GM12878 (cell line): ENCODE measurements at regions of chr3 and their contacts with region 1.

Region 1: DNA sequence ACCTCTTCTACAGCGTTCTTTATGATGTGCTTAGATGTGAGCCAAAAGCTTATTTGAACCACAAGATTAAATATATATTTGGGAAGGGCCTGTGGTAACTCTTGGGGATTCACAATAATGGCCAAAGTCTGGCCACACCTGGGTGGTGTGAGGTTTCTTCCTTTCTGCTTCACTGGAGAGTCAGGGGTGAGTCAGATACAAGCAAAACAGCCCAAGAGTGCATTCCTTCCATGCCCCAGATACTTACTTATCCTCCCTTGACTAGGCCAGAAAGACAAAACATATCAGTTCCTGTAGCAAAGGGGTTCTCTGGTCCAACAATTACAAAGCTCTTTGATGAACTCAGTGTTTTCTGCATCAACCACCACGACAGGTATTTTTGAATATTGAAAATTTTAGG is 941 bp downstream of the ZBED2 start:
- DNase-seq: no peak
- ATAC-seq: peak; percentile 87
- H3K4me3 ChIP-seq: no peak overlapping the region
- H3K27ac ChIP-seq: no peak overlapping the region
- H3K4me1 ChIP-seq: no peaks in the 10 kb centered on the region
- H3K27me3 ChIP-seq: no peaks in the 10 kb centered on the region
- CTCF ChIP-seq: no peak
- EP300 ChIP-seq: no peak
- POLR2A ChIP-seq: no peak
- RAD21 ChIP-seq: no peak

Region 2: DNA sequence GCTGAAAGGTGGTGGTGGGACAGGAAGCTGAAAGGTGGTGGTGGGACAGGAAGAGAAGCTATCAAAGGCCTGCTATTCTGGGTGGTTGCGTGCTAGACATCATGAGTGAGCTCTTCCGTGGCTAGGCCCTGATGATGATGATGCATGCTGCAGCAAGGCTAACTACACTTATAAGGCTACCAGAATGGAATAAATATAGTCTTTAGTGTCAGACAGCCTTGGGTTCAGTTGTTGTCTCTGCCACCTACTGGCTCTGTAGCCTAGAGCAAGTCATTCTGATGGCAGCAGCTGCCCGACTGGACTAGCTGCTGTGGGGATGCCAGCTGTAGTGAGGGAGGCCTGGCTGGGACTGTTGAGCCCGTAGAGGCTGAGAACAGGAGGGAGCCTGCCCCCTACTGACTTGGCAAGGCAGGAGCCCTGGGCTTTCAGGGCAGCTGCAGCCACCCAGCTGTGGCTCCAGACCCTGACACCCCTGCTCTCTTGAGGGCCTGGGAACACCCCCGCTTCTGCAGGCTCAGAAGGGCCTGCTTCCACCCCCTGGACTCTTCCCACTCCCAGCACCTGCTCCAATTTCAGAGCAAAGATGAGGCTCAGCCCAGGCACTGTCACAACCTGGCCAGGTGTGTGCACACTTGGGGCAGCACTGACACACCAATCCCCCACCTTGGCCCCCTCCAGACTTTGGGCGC is 22.4 kb after region 1 on chr3:
- CTCF ChIA-PET with region 1: interaction called, 12 read pairs
- POLR2A ChIA-PET with region 1: interaction called, 4 read pairs
- RAD21 ChIA-PET with region 1: interaction called, 3 read pairs
- SMC1A ChIA-PET with region 1: interaction called, 7 read pairs
- in situ Hi-C with region 1: no loop called
- intact Hi-C with region 1: no loop called
- DNase-seq: no peak
- ATAC-seq: peak; percentile 83
- H3K4me3 ChIP-seq: no peak overlapping the region
- H3K27ac ChIP-seq: no peak overlapping the region
- H3K4me1 ChIP-seq: no peaks in the 10 kb centered on the region
- H3K27me3 ChIP-seq: no peaks in the 10 kb centered on the region
- CTCF ChIP-seq: peak; percentile 16 to 29 (median 20); a peak in 4 of 6 replicates
- EP300 ChIP-seq: no peak
- POLR2A ChIP-seq: no peak
- RAD21 ChIP-seq: peak; percentile 29